ENCODE measurements at regions of chr17 and their contacts with region 1.

Region 1: GRCh38 chr17:73060721-73061120 is 31.8 kb downstream of the SLC39A11 start:
- DNase-seq: no peak
- ATAC-seq: no peak
- H3K4me3 Mint-ChIP-seq: no peak overlapping the region
- H3K27ac Mint-ChIP-seq: no peak overlapping the region
- H3K4me1 Mint-ChIP-seq: no peaks in the 10 kb centered on the region
- H3K27me3 Mint-ChIP-seq: no peaks in the 10 kb centered on the region
- CTCF ChIP-seq: no peak

Region 2: DNA sequence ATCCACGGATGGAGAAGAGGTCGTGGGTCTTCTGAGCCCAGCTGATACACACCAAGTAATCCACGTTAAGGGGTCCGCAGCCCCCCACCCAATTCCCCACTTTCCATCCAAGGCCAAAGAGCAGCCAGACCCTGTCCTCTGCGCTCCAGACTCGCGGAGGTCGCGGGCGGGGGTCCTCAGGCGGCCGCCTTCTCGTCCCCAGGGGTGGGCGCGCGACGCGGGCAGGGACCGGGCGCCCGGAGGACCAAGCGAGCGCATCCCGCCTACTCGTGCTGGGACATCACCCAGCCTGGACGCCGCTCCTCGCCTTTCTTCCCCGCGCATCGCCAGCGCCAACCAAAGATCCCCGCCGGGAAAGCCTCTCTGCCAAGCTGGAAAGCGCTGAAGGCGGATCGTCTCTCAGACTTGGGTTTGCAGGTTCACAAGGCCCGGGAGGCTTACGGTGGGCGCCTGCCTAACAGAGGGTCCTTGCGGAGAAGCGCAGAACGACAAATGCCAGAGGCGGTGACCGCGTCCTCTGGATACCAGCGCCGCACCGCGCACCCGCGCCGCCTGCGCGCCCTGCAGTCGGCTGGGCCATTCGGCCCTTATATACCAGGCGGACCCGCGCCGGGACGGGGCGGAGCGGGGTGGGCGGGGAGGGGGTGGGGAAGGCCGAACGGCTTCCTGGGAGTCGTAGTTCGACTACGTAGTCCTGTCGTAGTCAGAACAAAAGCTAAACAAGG is 468.3 kb before region 1 on chr17:
- CTCF ChIA-PET with region 1: no interaction called
- POLR2A ChIA-PET with region 1: interaction called, 10 read pairs
- DNase-seq: peak; percentile 81
- ATAC-seq: peak; percentile 84
- H3K4me3 Mint-ChIP-seq: peak overlapping the region; percentile 84
- H3K27ac Mint-ChIP-seq: no peak overlapping the region
- H3K4me1 Mint-ChIP-seq: peaks cover 32% of the 10 kb centered on the region
- H3K27me3 Mint-ChIP-seq: peaks cover 53% of the 10 kb centered on the region
- CTCF ChIP-seq: no peak

Region 3: DNA sequence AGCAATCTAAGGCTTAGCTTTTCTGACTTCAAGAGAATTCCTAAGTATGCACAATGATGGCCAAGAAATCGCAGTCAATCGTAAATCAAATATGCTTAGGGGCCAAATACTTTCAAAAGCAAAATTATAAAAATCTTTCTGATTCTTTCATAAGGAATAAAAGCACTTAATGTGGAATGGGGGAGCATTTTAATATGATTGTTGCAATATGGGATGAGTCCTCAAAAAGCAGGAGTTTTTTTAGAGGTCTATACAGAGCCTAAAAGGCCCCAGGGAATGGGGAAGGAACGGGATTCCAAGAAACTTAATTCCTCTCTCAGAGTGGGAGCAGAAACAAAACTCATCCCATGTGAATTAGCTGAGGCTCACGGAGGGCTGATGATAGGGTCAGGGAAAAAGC is 46.5 kb after region 1 on chr17:
- CTCF ChIA-PET with region 1: no interaction called
- POLR2A ChIA-PET with region 1: no interaction called
- DNase-seq: no peak
- ATAC-seq: no peak
- H3K4me3 Mint-ChIP-seq: no peak overlapping the region
- H3K27ac Mint-ChIP-seq: no peak overlapping the region
- H3K4me1 Mint-ChIP-seq: no peaks in the 10 kb centered on the region
- H3K27me3 Mint-ChIP-seq: no peaks in the 10 kb centered on the region
- CTCF ChIP-seq: no peak